ENCODE measurements at regions of chr16 and their contacts with region 1.

Region 1: DNA sequence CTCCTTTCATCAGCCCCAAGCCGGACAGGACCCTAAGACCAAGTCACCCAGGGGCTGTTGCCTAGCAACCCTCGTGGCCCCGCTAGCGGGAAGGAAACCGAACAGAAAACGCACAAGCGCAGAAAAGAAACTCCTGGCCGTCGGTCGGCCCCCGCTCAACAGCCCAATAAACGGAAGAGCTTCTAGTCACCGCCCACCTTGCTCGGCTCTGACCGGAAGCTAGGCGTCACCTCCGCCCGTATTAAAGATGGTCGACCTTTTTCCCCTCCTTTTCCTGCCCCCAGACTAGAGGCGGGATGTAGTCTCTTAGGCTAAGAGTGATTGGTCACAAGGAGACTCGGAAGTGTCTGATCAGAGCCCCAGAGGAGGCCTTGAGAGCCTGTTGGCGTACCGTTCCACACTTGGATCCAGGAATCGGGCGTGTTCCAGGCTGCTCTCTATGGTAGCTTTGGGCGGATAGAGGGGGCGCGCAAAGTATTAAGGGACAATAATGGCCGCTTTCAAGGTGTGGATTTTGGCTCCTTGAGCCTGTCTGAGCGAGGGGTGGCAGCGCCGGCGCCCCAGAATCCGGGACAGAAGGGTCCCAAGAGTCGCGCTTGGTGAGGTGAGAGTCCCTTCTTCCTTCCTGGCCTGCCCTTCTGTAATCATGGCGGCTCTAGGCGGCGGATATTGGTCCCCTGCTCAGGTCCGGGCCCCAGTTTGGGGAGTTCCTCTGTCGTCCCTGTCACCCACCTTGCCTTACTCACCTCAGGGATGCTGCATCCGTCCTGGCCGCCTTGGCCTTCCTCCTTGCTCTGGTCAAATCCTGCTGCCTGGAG is at the starts of genes DHX38 and TXNL4B:
- DNase-seq: peak; percentile 83 to 98 (median 91)
- ATAC-seq: peak; percentile 95
- H3K4me3 ChIP-seq: peak within 1 kb of the TSS; percentile 89 to 97
- H3K4me3 Mint-ChIP-seq: peak within 1 kb of the TSS; percentile 98
- H3K27ac ChIP-seq: peak within 1 kb of the TSS; percentile 87 to 98
- H3K27ac Mint-ChIP-seq: peak within 1 kb of the TSS; percentile 98
- H3K4me1 ChIP-seq: peaks cover 32% of the 10 kb centered on the region
- H3K4me1 Mint-ChIP-seq: peaks cover 46% of the 10 kb centered on the region
- H3K27me3 ChIP-seq: no peaks in the 10 kb centered on the region
- H3K27me3 Mint-ChIP-seq: no peaks in the 10 kb centered on the region
- CTCF ChIP-seq: no peak
- total RNA-seq, gene DHX38: 122 to 126 TPM
- total RNA-seq, gene TXNL4B: 16.7 to 18.3 TPM

Region 2: DNA sequence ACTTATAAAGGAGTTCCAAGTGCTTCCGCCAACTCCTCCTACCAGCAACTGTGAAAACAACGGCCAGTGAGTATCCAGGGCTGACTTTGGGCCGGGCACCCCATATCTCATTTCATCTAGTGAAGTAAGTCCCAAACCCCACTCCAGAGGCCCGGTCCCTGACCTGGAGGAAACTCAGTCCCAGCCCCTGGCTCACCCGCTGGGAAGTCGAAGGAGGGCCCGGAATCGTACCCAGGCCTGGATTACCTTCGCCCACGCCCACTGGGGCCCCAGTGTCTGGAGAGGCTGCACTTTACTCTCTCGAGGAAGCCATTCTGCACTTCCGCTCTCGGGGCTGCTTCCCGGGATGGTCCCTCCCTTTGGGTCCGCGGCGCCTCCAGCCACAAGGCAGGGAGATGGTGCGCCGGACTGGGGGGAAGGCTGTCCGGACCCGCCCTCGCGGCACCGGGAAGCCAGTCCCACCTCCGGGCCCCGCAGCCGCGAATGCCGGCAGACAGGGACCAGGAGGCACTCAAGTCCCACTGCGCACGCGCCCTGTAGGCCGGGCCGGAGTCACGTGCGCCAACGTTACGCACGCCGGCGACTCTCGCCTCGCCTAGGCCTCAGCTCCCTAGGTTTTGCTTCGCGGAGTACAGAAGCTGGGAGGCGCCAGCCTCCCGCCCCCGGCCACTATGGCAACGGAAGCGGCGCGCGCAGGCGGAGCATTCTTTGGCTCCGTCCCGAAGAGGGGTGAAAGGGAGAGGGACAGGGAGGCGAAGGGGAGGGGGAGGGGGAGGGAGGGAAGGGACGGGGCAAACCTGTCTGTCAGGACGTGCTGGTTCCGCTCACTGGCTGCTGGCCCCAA is 804.5 kb before region 1 on chr16 and contains the start of gene CMTR2:
- CTCF ChIA-PET with region 1: no interaction called
- POLR2A ChIA-PET with region 1: no interaction called
- intact Hi-C with region 1: loop called in 1 of 2 experiments (anchors 5 kb)
- DNase-seq: peak; percentile 71 to 95 (median 87)
- ATAC-seq: peak; percentile 91
- H3K4me3 ChIP-seq: peak within 1 kb of the TSS; percentile 72 to 91
- H3K4me3 Mint-ChIP-seq: peak within 1 kb of the TSS; percentile 87
- H3K27ac ChIP-seq: peak within 1 kb of the TSS; percentile 75 to 85
- H3K27ac Mint-ChIP-seq: peak within 1 kb of the TSS; percentile 80
- H3K4me1 ChIP-seq: peaks cover 11% of the 10 kb centered on the region
- H3K4me1 Mint-ChIP-seq: peaks cover 26% of the 10 kb centered on the region
- H3K27me3 ChIP-seq: no peaks in the 10 kb centered on the region
- H3K27me3 Mint-ChIP-seq: peaks cover 14% of the 10 kb centered on the region
- CTCF ChIP-seq: no peak
- total RNA-seq, gene CMTR2: 7.7 to 9.2 TPM

Region 3: GRCh38 chr16:71808593-71809459 is 284.8 kb before region 1 on chr16 and contains the start of gene AP1G1:
- CTCF ChIA-PET with region 1: no interaction called
- POLR2A ChIA-PET with region 1: no interaction called
- intact Hi-C with region 1: loop called in 1 of 2 experiments (anchors 5 kb)
- DNase-seq: peak; percentile 87 to 99 (median 93)
- ATAC-seq: peak; percentile 89
- H3K4me3 ChIP-seq: peak within 1 kb of the TSS; percentile 95
- H3K4me3 Mint-ChIP-seq: peak within 1 kb of the TSS; percentile 95
- H3K27ac ChIP-seq: peak within 1 kb of the TSS; percentile 98
- H3K27ac Mint-ChIP-seq: peak within 1 kb of the TSS; percentile 99
- H3K4me1 ChIP-seq: peaks cover 26% of the 10 kb centered on the region
- H3K4me1 Mint-ChIP-seq: peaks cover 40% of the 10 kb centered on the region
- H3K27me3 ChIP-seq: no peaks in the 10 kb centered on the region
- H3K27me3 Mint-ChIP-seq: no peaks in the 10 kb centered on the region
- CTCF ChIP-seq: no peak
- total RNA-seq, gene AP1G1: 179 to 202 TPM

Region 4: DNA sequence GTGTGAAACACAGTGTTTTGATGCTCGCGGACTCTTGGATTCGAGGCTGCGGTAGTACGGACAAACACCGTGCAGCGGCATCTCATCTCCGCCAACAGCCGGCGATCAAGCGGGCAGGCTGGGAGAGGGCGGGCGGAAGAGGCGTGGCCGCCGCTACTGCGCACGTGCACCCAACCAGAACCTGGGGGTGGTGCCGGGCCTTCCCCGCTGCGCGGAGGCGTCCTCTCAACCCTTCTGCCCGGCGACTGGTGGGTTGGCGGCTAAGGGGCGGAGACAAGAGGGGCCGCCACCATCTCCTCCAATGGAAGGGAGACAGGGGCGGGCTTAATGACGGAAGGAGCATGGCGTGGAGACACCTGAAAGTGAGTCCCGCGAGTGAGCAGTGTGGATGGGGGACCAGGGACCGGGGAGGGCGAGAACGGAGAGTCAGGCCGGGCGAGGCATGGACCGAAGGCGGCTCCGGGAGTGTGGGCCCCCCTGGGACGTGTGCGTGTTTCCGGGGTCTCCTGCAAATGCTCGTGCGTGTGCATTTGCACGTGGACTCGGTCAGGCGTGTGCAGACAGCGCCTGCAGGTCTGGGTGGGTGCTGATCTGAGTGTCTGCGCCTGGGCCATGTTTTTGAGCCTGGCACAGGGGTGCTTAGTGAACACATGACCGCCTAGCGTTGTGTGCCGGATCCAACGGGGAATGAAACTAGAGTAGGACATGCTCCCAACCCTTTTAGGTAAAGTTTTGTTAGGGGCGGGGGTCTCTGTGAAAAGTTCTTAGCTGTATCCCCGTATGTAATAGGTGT is 85.0 kb before region 1 on chr16 and contains the start of gene DHODH:
- CTCF ChIA-PET with region 1: no interaction called
- POLR2A ChIA-PET with region 1: no interaction called
- intact Hi-C with region 1: loop called (anchors 1 kb)
- DNase-seq: peak; percentile 94 to 99 (median 97)
- ATAC-seq: peak; percentile 98
- H3K4me3 ChIP-seq: peak within 1 kb of the TSS; percentile 87 to 90
- H3K4me3 Mint-ChIP-seq: peak within 1 kb of the TSS; percentile 91
- H3K27ac ChIP-seq: peak within 1 kb of the TSS; percentile 41 to 66
- H3K27ac Mint-ChIP-seq: peak within 1 kb of the TSS; percentile 76
- H3K4me1 ChIP-seq: no peaks in the 10 kb centered on the region
- H3K4me1 Mint-ChIP-seq: peaks cover 20% of the 10 kb centered on the region
- H3K27me3 ChIP-seq: no peaks in the 10 kb centered on the region
- H3K27me3 Mint-ChIP-seq: no peaks in the 10 kb centered on the region
- CTCF ChIP-seq: no peak
- total RNA-seq, gene DHODH: 2.4 to 3.0 TPM

Region 5: GRCh38 chr16:72221630-72222024 is 128.0 kb after region 1 on chr16:
- CTCF ChIA-PET with region 1: no interaction called
- POLR2A ChIA-PET with region 1: no interaction called
- intact Hi-C with region 1: no loop called
- DNase-seq: no peak
- ATAC-seq: no peak
- H3K4me3 ChIP-seq: no peak overlapping the region
- H3K4me3 Mint-ChIP-seq: no peak overlapping the region
- H3K27ac ChIP-seq: no peak overlapping the region
- H3K27ac Mint-ChIP-seq: no peak overlapping the region
- H3K4me1 ChIP-seq: no peaks in the 10 kb centered on the region
- H3K4me1 Mint-ChIP-seq: no peaks in the 10 kb centered on the region
- H3K27me3 ChIP-seq: no peaks in the 10 kb centered on the region
- H3K27me3 Mint-ChIP-seq: no peaks in the 10 kb centered on the region
- CTCF ChIP-seq: no peak

Region 6: DNA sequence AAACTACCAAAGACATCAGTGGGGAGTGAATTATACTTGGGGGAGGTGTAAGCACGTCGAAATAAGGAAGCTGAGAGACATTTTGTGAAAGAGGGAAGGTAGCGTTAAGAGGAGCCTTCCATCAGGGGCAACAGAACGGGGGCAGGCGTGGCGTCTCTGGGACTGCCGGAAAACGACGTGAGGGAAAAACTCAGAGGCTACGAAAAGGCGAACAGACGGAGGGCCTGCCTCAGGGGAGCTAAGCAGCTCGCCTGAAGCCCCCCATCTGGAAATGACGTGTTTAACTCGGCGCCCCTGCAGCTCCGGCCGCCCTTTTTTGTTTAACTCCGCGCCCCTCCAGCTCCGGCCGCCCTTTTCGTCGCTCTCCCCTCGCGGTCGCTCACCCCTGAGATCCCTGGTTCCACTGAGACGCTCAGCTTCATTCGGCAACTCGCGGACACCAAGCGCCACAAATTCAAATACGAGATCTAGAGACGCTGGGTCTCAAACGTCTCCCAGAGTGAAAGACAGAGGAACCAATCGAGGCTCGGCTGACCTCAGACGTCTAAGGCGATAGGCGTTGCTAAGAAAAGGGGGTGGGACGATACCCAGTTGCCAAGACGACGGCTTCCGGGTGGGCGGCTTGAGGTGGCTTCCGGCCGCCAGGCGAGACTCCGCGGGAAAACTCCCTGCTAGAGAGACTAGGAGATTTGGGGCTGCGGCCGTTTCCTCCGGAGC is 571.0 kb after region 1 on chr16:
- CTCF ChIA-PET with region 1: no interaction called
- POLR2A ChIA-PET with region 1: no interaction called
- intact Hi-C with region 1: loop called in 1 of 2 experiments (anchors 2 kb)
- DNase-seq: peak; percentile 87 to 98 (median 93)
- ATAC-seq: peak; percentile 98
- H3K4me3 ChIP-seq: peak overlapping the region; percentile 81 to 93
- H3K4me3 Mint-ChIP-seq: peak overlapping the region; percentile 100
- H3K27ac ChIP-seq: peak overlapping the region; percentile 59 to 77
- H3K27ac Mint-ChIP-seq: peak overlapping the region; percentile 98
- H3K4me1 ChIP-seq: peaks cover 14% of the 10 kb centered on the region
- H3K4me1 Mint-ChIP-seq: peaks cover 24% of the 10 kb centered on the region
- H3K27me3 ChIP-seq: no peaks in the 10 kb centered on the region
- H3K27me3 Mint-ChIP-seq: no peaks in the 10 kb centered on the region
- CTCF ChIP-seq: no peak

Measured in CD8-positive, alpha-beta T cell (primary cell).